Activated T-helper 1 cell treated with anti-CD3 and anti-CD28 coated beads, Interleukin-12 subunit alpha, Interleukin-12 subunit beta, Interleukin-2, Interleukin-4 antibody, amounts not matched to agents 30 ng/mL and 10 ng/mL and 1 ng/mL, durations not matched to agents 14 hours and 24 hours and 36 hours (primary cell): ENCODE measurements at regions of chr12 and their contacts with region 1.

Region 1: GRCh38 chr12:47397664-47398281 is 308.1 kb downstream of the RPAP3 start:
- DNase-seq: peak; percentile 41
- H3K4me3 Mint-ChIP-seq: no peak overlapping the region
- H3K27ac Mint-ChIP-seq: peak overlapping the region; percentile 89
- H3K4me1 Mint-ChIP-seq: peaks cover 90% of the 10 kb centered on the region
- H3K27me3 Mint-ChIP-seq: no peaks in the 10 kb centered on the region

Region 2: DNA sequence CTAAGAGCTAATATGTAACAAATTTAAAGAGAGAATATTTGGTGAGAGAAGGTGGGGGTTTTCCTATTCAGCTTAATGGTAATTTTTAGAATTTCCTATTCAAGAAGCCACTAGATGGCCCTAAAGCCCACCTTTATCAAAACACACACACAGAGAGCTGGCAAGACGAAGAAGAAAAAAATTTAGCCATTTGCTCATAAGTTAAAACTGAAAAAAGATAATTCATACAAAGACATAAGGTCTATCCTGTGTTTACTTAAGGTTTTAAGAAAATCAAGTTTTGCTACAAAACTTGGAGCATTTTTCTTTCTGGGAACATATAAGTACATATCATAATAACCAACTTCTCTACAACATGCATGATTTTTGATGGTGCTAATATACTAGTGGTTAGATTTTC is 365.1 kb before region 1 on chr12:
- intact Hi-C with region 1: loop called (anchors 1 kb)
- DNase-seq: no peak
- H3K4me3 Mint-ChIP-seq: no peak overlapping the region
- H3K27ac Mint-ChIP-seq: no peak overlapping the region
- H3K4me1 Mint-ChIP-seq: peaks cover 11% of the 10 kb centered on the region
- H3K27me3 Mint-ChIP-seq: peaks cover 6% of the 10 kb centered on the region

Region 3: GRCh38 chr12:47121146-47121545 is 276.6 kb before region 1 on chr12:
- intact Hi-C with region 1: loop called (anchors 2 kb)
- DNase-seq: no peak
- H3K4me3 Mint-ChIP-seq: no peak overlapping the region
- H3K27ac Mint-ChIP-seq: peak overlapping the region; percentile 46
- H3K4me1 Mint-ChIP-seq: peaks cover 10% of the 10 kb centered on the region
- H3K27me3 Mint-ChIP-seq: no peaks in the 10 kb centered on the region

Region 4: DNA sequence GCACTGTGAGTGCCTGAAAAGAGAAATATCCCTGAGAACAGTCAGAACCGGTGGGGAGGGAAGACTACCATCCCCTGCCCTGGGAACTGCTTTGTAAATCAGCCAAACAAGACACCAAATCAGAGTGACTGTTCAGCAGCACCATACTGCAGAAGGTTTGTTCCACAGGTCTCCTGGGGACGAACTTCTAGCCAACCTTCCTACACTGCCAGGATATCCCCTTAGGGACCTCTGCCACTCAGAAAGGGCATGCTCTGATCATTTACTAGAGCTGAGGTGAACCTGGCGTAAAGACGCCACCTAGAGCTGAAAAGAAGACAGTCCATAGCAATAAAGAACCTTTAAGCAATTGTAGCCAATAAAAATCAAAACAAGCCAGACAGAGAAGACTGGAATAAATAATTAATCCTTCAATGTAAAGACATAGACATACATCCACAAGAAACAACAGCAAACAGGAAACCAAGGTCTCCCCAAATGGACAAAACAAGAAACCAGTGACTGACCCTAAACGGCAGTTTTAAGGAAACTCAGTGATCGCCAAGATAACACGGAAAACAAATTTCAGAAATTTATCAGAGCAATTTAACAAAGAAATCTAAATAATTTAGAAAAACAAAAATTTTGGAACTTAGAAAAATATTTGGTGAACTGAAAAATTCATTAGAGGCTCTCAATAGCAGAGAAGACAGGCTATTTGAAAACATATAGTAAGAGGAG is 89.9 kb before region 1 on chr12:
- intact Hi-C with region 1: loop called (anchors 1 kb)
- DNase-seq: peak; percentile 43
- H3K4me3 Mint-ChIP-seq: peak overlapping the region; percentile 91
- H3K27ac Mint-ChIP-seq: peak overlapping the region; percentile 87
- H3K4me1 Mint-ChIP-seq: peaks cover 69% of the 10 kb centered on the region
- H3K27me3 Mint-ChIP-seq: no peaks in the 10 kb centered on the region

Region 5: GRCh38 chr12:47361389-47362021 is 36.3 kb before region 1 on chr12:
- intact Hi-C with region 1: loop called (anchors 1 kb)
- DNase-seq: peak; percentile 52
- H3K4me3 Mint-ChIP-seq: peak overlapping the region; percentile 67
- H3K27ac Mint-ChIP-seq: peak overlapping the region; percentile 97
- H3K4me1 Mint-ChIP-seq: peaks cover 56% of the 10 kb centered on the region
- H3K27me3 Mint-ChIP-seq: no peaks in the 10 kb centered on the region

Region 6: GRCh38 chr12:47413806-47414205 is 16.0 kb after region 1 on chr12:
- intact Hi-C with region 1: loop called (anchors 2 kb)
- DNase-seq: no peak
- H3K4me3 Mint-ChIP-seq: no peak overlapping the region
- H3K27ac Mint-ChIP-seq: peak overlapping the region; percentile 12
- H3K4me1 Mint-ChIP-seq: peaks cover 46% of the 10 kb centered on the region
- H3K27me3 Mint-ChIP-seq: no peaks in the 10 kb centered on the region

Region 7: GRCh38 chr12:47882781-47883546 is 485.2 kb after region 1 on chr12:
- intact Hi-C with region 1: loop called (anchors 10 kb)
- DNase-seq: peak; percentile 44
- H3K4me3 Mint-ChIP-seq: peak overlapping the region; percentile 94
- H3K27ac Mint-ChIP-seq: peak overlapping the region; percentile 100
- H3K4me1 Mint-ChIP-seq: peaks cover 91% of the 10 kb centered on the region
- H3K27me3 Mint-ChIP-seq: no peaks in the 10 kb centered on the region